ENCODE measurements at regions of chr10 and their contacts with region 1.

Region 1: DNA sequence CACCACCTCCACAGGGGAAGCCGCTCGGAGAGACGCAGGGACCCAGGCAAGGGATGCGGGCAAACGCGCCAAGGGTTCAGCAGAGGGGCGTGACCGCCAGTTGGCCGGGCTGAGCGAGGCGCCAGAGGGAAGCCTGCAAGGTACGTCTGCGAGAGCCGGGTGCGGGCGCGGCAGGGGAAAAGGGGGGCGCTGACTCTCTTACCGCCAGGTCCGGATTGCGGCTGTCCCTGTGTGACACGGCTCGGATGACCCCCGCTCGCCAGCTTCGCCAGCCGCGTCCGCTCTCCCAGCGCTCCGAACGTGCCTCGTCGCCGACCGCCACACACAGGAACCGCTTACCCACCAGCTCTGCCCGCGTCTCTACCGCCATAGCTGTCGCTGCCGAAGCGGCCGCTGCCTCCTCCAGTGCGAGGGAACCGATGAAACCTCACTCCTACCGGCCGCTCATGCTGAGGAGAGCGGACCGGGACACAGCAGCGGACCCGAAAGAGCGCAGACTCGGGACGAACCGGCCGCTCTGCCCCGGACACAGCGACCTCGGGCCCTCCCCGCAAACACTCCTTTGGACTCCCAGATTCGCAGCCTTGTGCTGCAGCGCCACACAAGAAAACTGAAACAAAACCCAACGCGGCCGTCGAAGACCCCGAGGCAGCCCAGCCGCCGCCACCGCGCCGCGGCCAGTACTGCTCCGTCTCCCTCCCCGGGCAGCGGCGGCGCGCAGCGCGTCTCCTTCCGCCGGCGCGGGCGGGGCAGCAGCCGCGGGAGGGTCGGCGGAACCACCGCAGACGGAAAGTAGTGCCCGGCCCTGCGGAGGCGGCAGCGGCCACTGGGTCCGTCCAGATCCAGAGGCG is at the start of gene JMJD1C:
- DNase-seq: peak; percentile 75
- H3K4me3 Mint-ChIP-seq: peak within 1 kb of the TSS; percentile 97
- H3K27ac Mint-ChIP-seq: peak within 1 kb of the TSS; percentile 93
- H3K4me1 Mint-ChIP-seq: peaks cover 19% of the 10 kb centered on the region
- H3K27me3 Mint-ChIP-seq: no peaks in the 10 kb centered on the region
- CTCF ChIP-seq: no peak
- total RNA-seq, gene JMJD1C: 91.9 and 101 TPM in 2 replicates

Region 2: DNA sequence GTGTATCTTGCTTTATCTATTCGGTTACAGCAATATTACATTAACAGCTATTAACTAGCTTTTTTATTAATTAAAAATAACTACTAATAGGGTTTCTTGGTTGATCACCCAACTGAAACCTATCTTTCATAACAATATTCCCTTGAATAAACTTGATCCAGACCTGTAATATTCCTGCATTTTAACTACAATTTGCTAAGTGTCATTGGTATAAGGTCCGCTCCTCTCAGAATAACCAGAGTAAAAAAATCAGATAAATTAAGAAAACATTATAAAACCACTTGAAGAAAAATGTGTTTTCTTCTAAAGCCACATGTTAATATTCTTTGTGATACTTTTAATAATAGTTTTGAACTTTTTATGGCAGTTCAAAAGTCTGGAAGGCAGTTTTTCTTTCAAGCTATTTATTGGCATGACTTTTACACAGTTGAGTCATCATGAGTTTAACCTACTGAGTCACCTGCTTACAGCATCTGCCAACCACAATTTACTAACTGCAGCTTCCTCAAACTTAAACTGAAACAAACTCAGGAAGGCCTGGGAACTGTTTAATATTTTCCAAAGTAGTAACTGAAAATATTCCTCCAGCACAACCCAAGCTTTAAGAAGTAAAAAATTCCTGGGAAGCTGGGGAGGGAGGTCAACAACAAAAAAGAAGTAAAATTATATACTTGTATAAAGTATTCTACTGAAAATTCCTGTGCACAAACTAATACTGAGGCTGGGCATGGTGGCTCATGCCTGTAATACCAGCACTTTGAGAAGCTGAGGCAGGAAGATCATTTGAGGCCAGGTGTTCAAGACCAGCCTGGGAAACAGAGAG is 229.2 kb before region 1 on chr10:
- CTCF ChIA-PET with region 1: interaction called, 3 read pairs
- POLR2A ChIA-PET with region 1: interaction called, 19 read pairs
- intact Hi-C with region 1: no loop called
- DNase-seq: peak; percentile 85
- H3K4me3 Mint-ChIP-seq: peak overlapping the region; percentile 19
- H3K27ac Mint-ChIP-seq: peak overlapping the region; percentile 64
- H3K4me1 Mint-ChIP-seq: peaks cover 24% of the 10 kb centered on the region
- H3K27me3 Mint-ChIP-seq: no peaks in the 10 kb centered on the region
- CTCF ChIP-seq: no peak

Region 3: GRCh38 chr10:63481815-63482421 is 16.4 kb after region 1 on chr10:
- CTCF ChIA-PET with region 1: interaction called, 3 read pairs
- POLR2A ChIA-PET with region 1: interaction called, 10 read pairs
- intact Hi-C with region 1: no loop called
- DNase-seq: no peak
- H3K4me3 Mint-ChIP-seq: no peak overlapping the region
- H3K27ac Mint-ChIP-seq: no peak overlapping the region
- H3K4me1 Mint-ChIP-seq: peaks cover 6% of the 10 kb centered on the region
- H3K27me3 Mint-ChIP-seq: no peaks in the 10 kb centered on the region
- CTCF ChIP-seq: no peak

Region 4: DNA sequence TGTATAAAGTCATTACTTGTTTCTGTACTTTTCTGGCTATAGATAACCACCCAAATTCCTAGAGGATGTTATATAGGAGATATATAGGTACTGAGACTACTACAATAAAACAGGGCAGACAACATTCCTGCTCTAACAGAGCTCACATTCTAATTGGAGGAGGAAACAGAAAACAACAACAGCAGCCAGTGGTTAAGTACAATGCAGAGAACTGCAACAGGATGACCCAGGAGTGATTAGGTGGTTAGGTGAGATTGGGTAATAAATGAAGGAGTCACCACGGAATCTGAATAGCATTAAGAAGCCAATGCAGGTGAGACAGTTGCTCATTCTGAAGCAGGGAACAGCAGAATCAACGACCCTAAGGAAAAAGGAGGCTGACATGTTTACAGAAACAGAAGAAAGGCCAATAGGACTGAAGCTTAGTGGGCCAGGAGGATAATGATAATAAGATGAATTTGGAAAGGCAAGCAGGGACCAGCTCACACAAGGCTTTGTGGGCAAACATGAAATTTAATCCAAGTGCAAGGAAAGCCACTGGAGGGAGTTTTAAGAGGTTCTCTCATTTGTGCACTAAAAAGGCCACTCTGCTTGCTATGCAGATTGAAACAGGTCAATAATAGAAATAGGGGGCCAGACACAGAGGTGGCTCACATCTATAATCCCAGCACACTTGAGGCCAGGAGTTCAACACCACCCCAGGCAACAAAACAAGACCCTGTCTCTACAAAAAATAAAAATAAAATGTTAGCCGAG is 38.8 kb after region 1 on chr10:
- CTCF ChIA-PET with region 1: interaction called, 3 read pairs
- POLR2A ChIA-PET with region 1: interaction called, 38 read pairs
- intact Hi-C with region 1: no loop called
- DNase-seq: peak; percentile 67
- H3K4me3 Mint-ChIP-seq: peak overlapping the region; percentile 4
- H3K27ac Mint-ChIP-seq: peak overlapping the region; percentile 60
- H3K4me1 Mint-ChIP-seq: peaks cover 20% of the 10 kb centered on the region
- H3K27me3 Mint-ChIP-seq: no peaks in the 10 kb centered on the region
- CTCF ChIP-seq: no peak

Region 5: GRCh38 chr10:63554657-63555056 is 89.1 kb after region 1 on chr10:
- CTCF ChIA-PET with region 1: no interaction called
- POLR2A ChIA-PET with region 1: interaction called, 27 read pairs
- intact Hi-C with region 1: no loop called
- DNase-seq: peak; percentile 12
- H3K4me3 Mint-ChIP-seq: peak overlapping the region; percentile 56
- H3K27ac Mint-ChIP-seq: peak overlapping the region; percentile 90
- H3K4me1 Mint-ChIP-seq: peaks cover 41% of the 10 kb centered on the region
- H3K27me3 Mint-ChIP-seq: no peaks in the 10 kb centered on the region
- CTCF ChIP-seq: no peak